Activated naive CD4-positive, alpha-beta T cell treated with anti-CD3 and anti-CD28 coated beads for 36 hours (primary cell): ENCODE measurements at regions of chrX and their contacts with region 1.

Region 1: DNA sequence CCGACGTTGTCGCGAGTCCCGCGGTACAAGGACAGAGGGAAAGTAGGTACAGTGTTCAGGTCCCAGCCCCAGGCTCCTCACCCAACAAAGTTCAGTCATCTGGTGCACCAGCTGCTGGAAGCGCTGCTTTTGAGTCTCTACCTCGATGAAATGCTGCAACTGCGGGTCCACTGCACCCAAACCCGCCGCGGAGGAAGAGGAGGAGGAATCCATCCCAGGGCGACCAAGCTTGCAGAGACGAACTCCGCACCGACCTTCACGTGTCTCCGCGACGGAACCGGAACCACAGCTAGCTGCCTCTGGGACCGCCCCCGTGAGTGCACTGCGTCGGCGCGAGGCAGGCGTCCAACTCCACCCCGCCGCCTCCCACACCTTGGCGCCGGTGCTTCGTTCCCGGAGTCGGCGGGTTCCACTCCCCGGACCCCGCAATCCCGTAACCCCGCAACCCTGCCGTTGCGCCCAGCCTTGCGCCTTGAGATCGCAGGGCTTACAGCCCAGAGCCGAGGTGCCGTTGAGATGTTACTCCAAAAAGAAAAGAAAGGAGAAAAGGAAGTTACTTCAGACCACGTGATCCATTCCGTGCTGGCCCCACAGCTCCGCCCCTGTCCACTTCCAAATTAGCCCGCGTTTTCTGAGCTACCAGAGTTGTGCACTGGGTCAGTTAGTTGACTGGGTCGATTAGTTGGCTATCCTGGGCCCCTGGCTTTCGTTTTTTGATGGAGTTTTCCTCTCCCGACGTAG is at the start of gene TIMM8A:
- DNase-seq: peak; percentile 82
- H3K4me3 Mint-ChIP-seq: peak within 1 kb of the TSS; percentile 84
- H3K27ac Mint-ChIP-seq: peak within 1 kb of the TSS; percentile 93
- H3K4me1 Mint-ChIP-seq: peaks cover 16% of the 10 kb centered on the region
- H3K27me3 Mint-ChIP-seq: no peaks in the 10 kb centered on the region
- total RNA-seq, gene TIMM8A: 14.9 to 15.9 TPM

Region 2: GRCh38 chrX:100120956-100121355 is 1227.7 kb before region 1 on chrX:
- CTCF ChIA-PET with region 1: no interaction called
- intact Hi-C with region 1: no loop called
- DNase-seq: no peak
- H3K4me3 Mint-ChIP-seq: no peak overlapping the region
- H3K27ac Mint-ChIP-seq: no peak overlapping the region
- H3K4me1 Mint-ChIP-seq: no peaks in the 10 kb centered on the region
- H3K27me3 Mint-ChIP-seq: no peaks in the 10 kb centered on the region

Region 3: DNA sequence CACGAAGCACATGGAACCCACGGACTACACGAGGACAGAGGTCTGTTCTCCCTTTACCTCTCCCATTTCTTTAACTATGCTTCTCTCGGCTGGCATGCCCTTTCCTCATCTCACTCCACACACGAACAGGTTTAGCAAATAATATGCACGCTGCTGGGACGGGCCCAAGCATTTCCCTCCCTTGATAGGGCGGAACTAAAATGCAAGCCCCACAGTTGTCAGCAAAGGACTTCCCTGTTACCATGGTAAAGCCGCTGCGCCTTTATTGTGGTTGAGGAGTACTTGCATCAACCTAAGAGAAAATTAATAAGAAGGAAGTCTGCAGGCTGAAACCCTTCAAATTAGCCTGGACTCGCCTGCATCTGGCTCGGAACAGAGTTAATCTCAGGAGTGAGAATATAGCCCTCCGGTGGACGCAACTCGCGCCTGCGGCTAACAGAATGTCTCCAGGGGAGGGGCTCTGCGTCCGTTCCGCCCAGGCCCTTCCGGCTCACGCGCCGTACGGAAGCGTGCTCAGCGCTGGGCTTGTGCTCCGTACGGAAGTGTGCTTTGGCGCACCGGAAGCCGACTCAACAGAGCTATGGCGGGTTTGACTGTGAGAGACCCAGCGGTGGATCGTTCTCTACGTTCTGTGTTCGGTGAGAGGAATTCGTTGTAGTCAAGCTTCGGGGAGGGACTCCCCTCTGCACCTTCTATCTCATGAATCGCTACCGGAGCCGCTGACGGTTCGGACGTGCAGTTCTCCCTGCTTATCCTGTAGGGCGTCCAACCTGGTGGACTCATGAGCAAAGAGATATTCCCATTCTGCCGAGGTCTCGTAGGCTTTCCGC is 528.6 kb before region 1 on chrX and contains the start of gene CSTF2:
- CTCF ChIA-PET with region 1: no interaction called
- intact Hi-C with region 1: loop called (anchors 1 kb)
- DNase-seq: peak; percentile 84
- H3K4me3 Mint-ChIP-seq: peak within 1 kb of the TSS; percentile 90
- H3K27ac Mint-ChIP-seq: peak within 1 kb of the TSS; percentile 95
- H3K4me1 Mint-ChIP-seq: peaks cover 11% of the 10 kb centered on the region
- H3K27me3 Mint-ChIP-seq: no peaks in the 10 kb centered on the region
- total RNA-seq, gene CSTF2: 44.3 to 46.8 TPM

Region 4: GRCh38 chrX:101390664-101391525 is 42.3 kb after region 1 on chrX and contains the start of gene RPL36A:
- CTCF ChIA-PET with region 1: interaction called, 6 read pairs
- intact Hi-C with region 1: loop called (anchors 1 kb)
- DNase-seq: peak; percentile 88
- H3K4me3 Mint-ChIP-seq: peak within 1 kb of the TSS; percentile 93
- H3K27ac Mint-ChIP-seq: peak within 1 kb of the TSS; percentile 94
- H3K4me1 Mint-ChIP-seq: peaks cover 18% of the 10 kb centered on the region
- H3K27me3 Mint-ChIP-seq: no peaks in the 10 kb centered on the region
- total RNA-seq, gene RPL36A: 446 to 500 TPM

Region 5: DNA sequence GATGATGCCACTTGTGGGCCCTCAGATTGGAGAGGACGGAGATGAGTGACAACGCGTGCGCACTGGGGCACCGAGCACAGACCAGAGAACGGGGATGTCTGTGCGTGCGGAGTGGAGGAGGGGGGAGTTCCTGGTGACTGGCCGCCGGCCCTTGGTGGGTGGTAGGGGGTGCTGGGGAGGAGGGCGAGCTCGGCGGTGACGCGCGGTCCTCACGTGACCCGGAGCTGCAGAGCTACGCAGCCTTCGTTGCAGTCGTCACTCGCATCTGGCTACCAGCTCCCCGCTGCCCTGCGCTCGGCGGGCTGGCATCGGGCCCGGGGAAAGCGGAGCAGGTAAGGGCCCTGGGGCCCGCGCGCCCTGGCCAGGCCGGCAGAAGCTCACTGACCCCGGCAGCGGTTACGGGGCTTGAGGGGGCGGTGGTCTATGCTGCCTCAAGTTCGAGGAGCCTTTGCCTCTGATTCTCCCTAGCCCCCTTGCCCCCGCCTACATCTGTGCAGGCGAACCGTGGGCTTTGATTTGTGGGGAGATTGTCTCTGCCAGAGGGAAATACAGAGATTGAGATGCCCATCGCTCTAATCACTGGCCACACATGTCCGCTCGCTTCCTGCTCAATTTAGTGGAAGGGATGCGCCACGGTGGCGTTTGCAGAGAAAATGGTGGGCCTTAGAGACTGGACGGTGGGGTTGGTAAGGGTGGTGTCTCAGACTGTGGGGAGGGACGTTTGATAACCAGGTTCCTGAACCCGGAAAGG is 136.8 kb after region 1 on chrX and contains the start of gene ARMCX4:
- CTCF ChIA-PET with region 1: no interaction called
- intact Hi-C with region 1: loop called (anchors 5 kb)
- DNase-seq: peak; percentile 52
- H3K4me3 Mint-ChIP-seq: peak within 1 kb of the TSS; percentile 76
- H3K27ac Mint-ChIP-seq: peak within 1 kb of the TSS; percentile 63
- H3K4me1 Mint-ChIP-seq: peaks cover 8% of the 10 kb centered on the region
- H3K27me3 Mint-ChIP-seq: no peaks in the 10 kb centered on the region
- total RNA-seq, gene ARMCX4: 5.5 to 6.1 TPM